ENCODE measurements at regions of chr10 and their contacts with region 1.

Region 1: GRCh38 chr10:103605359-103606095 is 112.0 kb downstream of the NEURL1 start:
- DNase-seq: peak; percentile 46
- H3K4me3 Mint-ChIP-seq: no peak overlapping the region
- H3K27ac Mint-ChIP-seq: no peak overlapping the region
- H3K4me1 Mint-ChIP-seq: no peaks in the 10 kb centered on the region
- H3K27me3 Mint-ChIP-seq: no peaks in the 10 kb centered on the region

Region 2: GRCh38 chr10:103696411-103697145 is 91.1 kb after region 1 on chr10:
- CTCF ChIA-PET with region 1: interaction called, 13 read pairs
- POLR2A ChIA-PET with region 1: no interaction called
- DNase-seq: peak; percentile 89
- H3K4me3 Mint-ChIP-seq: peak overlapping the region; percentile 54
- H3K27ac Mint-ChIP-seq: peak overlapping the region; percentile 75
- H3K4me1 Mint-ChIP-seq: peaks cover 49% of the 10 kb centered on the region
- H3K27me3 Mint-ChIP-seq: no peaks in the 10 kb centered on the region

Region 3: GRCh38 chr10:104080762-104081161 is 475.2 kb after region 1 on chr10:
- CTCF ChIA-PET with region 1: no interaction called
- POLR2A ChIA-PET with region 1: no interaction called
- DNase-seq: no peak
- H3K4me3 Mint-ChIP-seq: no peak overlapping the region
- H3K27ac Mint-ChIP-seq: no peak overlapping the region
- H3K4me1 Mint-ChIP-seq: no peaks in the 10 kb centered on the region
- H3K27me3 Mint-ChIP-seq: no peaks in the 10 kb centered on the region

Measured in activated CD4-positive, alpha-beta memory T cell treated with anti-CD3 and anti-CD28 coated beads, Interleukin-2, amount 10 ng/mL, durations not matched to agents 7 days and 5 days (primary cell).